CD4-positive, alpha-beta memory T cell (primary cell): ENCODE measurements at regions of chr16 and their contacts with region 1.

Region 1: DNA sequence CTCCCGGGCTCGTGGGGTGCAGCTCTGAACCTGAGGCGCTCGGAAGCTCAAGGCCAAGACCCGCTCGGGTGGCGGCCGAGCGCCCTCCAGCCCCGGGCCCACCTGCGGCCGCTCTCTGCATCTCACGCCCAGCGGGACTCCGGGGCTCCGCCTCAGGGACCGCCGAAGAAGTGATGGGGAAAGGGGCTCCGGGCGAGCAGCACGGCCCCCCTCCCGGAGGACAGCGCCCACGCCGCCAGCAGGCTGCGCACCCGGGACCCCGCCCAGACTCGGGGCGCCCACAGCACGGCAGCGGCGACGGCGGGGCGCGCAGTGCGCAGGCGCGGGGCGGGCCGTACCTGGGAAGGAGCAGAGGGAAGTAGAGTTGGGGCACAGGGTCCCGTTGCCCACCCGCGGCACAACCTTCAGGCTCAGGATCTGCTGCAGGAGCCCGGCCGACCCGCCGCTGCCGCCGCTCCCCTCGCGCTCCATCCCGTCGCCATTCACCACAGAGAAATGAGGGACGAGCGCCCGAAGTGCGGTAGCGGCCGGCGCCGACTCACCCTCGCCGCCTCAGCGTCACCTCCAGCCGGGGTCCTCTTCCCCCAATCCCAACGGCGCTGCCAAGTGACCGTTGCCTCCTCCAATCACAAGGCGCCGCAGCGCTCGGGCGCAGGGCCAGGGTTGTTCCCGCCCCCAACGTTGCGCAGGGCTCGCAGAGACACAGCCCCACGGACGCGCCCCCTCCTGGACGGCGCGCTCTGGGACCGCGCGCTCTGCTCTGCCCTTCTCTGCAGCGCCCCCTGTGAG is at the start of gene TMEM170A:
- DNase-seq: peak; percentile 97 to 99 (median 98)
- H3K4me3 ChIP-seq: peak within 1 kb of the TSS; percentile 47 to 91
- H3K4me3 Mint-ChIP-seq: peak within 1 kb of the TSS; percentile 91 to 98 (median 95)
- H3K27ac ChIP-seq: peak within 1 kb of the TSS; percentile 90
- H3K27ac Mint-ChIP-seq: peak within 1 kb of the TSS; percentile 88 to 98 (median 97)
- H3K4me1 ChIP-seq: peaks cover 40% of the 10 kb centered on the region
- H3K4me1 Mint-ChIP-seq: peaks cover 33 to 50% (median 42%) of the 10 kb centered on the region in 4 donors
- H3K27me3 ChIP-seq: no peaks in the 10 kb centered on the region
- H3K27me3 Mint-ChIP-seq: no peaks in the 10 kb centered on the region
- total RNA-seq, gene TMEM170A: 50.7 to 54.3 TPM

Region 2: GRCh38 chr16:75148311-75149195 is 315.8 kb before region 1 on chr16 and contains the start of gene ZFP1:
- CTCF ChIA-PET with region 1: interaction called, 4 read pairs
- POLR2A ChIA-PET with region 1: no interaction called
- intact Hi-C with region 1: loop called (anchors 2 kb)
- DNase-seq: peak; percentile 92 to 96 (median 93)
- H3K4me3 ChIP-seq: peak within 1 kb of the TSS; percentile 44 to 95
- H3K4me3 Mint-ChIP-seq: peak within 1 kb of the TSS; percentile 82 to 91 (median 88)
- H3K27ac ChIP-seq: peak within 1 kb of the TSS; percentile 75
- H3K27ac Mint-ChIP-seq: peak within 1 kb of the TSS; percentile 75 to 93 (median 91)
- H3K4me1 ChIP-seq: peaks cover 5% of the 10 kb centered on the region
- H3K4me1 Mint-ChIP-seq: peaks cover 8 to 23% (median 13%) of the 10 kb centered on the region in 4 donors
- H3K27me3 ChIP-seq: no peaks in the 10 kb centered on the region
- H3K27me3 Mint-ChIP-seq: no peaks in the 10 kb centered on the region
- total RNA-seq, gene ZFP1: 11.7 to 13.4 TPM

Region 3: DNA sequence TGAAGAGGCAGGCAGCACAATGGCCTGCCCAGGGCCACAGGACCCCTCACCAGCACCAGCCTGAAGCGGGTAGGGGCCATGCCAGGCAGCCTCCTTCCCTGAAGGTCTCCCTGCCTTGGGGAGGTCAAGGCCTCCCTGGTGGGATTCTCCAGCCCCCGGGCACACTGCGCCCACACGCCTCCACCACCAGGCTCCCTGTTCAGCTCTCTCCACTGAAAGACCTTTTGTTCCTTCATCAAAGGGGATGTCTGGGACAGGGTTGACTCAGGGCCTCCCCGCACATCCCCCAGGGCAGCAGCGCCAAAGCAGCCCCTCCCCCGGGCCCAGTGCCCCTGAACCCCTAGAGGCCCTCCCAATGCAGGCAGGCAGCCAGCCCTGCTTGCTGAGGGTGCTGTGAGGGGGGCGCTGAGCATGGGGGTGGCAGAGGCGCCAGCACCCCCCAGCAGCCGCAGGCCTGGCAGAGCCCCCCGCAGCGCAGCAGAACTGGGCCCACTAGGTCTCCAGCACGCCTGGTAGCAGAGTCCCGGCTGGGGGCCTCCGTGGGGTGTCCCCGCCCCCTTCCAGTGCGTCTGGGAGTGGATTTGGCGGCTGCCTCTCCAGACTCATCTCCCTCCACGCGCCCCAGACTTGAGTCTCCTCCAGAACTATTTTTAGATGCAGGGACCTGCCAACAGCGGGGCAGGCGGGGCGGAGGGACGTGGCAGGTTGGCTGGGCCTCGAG is 226.0 kb before region 1 on chr16:
- CTCF ChIA-PET with region 1: interaction called, 10 read pairs
- POLR2A ChIA-PET with region 1: no interaction called
- intact Hi-C with region 1: loop called (anchors 1 kb)
- DNase-seq: no peak
- H3K4me3 ChIP-seq: no peak overlapping the region
- H3K4me3 Mint-ChIP-seq: no peak overlapping the region
- H3K27ac ChIP-seq: no peak overlapping the region
- H3K27ac Mint-ChIP-seq: no peak overlapping the region
- H3K4me1 ChIP-seq: peaks cover 6% of the 10 kb centered on the region
- H3K4me1 Mint-ChIP-seq: peaks cover 0 to 5% (median 2%) of the 10 kb centered on the region in 4 donors
- H3K27me3 ChIP-seq: no peaks in the 10 kb centered on the region
- H3K27me3 Mint-ChIP-seq: no peaks in the 10 kb centered on the region

Region 4: GRCh38 chr16:75443298-75443697 is 21.0 kb before region 1 on chr16:
- CTCF ChIA-PET with region 1: interaction called, 17 read pairs
- POLR2A ChIA-PET with region 1: interaction called, 4 read pairs
- intact Hi-C with region 1: no loop called
- DNase-seq: no peak
- H3K4me3 ChIP-seq: no peak overlapping the region
- H3K4me3 Mint-ChIP-seq: no peak overlapping the region
- H3K27ac ChIP-seq: no peak overlapping the region
- H3K27ac Mint-ChIP-seq: no peak overlapping the region
- H3K4me1 ChIP-seq: no peaks in the 10 kb centered on the region
- H3K4me1 Mint-ChIP-seq: no peaks in the 10 kb centered on the region
- H3K27me3 ChIP-seq: no peaks in the 10 kb centered on the region
- H3K27me3 Mint-ChIP-seq: no peaks in the 10 kb centered on the region

Region 5: DNA sequence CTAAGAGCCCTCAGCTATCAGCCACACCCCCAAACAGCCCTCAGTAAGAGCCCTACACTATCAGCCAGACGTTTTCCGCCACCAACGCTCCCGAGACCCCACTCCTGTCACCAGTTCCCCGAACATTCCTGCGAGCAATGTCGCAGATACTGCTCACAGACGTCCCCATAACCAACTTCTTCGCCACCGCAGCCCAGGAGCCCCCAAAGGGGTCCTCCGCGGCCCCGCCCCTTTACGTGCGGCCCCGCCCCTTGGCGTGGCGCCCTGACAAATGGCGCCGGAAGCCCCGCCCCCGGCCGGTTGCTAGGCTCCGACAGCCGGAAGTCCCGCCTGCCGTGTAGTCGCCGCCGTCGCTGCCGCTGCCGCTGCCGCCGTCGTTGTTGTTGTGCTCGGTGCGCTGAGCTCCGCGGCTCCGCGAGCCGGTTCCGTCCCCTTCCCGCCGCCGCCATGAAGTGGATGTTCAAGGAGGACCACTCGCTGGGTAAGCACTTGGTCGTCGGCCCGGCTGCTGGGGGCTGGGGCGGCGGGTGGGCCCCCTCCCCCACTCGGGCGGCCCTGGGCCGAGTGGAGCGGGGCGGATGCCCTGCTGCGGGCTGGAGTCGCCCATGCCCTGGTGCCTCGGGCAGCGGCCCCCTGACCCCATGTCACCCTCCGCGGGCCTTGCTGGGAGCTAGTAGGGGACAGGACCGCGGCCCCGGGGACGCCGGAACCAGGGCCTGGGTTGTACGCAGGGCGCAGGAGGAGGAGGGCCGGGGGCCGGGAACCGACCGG is 101.9 kb after region 1 on chr16 and contains the start of gene GABARAPL2:
- CTCF ChIA-PET with region 1: interaction called, 10 read pairs
- POLR2A ChIA-PET with region 1: no interaction called
- intact Hi-C with region 1: loop called (anchors 1 kb)
- DNase-seq: peak; percentile 87 to 95 (median 91)
- H3K4me3 ChIP-seq: peak within 1 kb of the TSS; percentile 68 to 100
- H3K4me3 Mint-ChIP-seq: peak within 1 kb of the TSS; percentile 89 to 100 (median 97)
- H3K27ac ChIP-seq: peak within 1 kb of the TSS; percentile 82
- H3K27ac Mint-ChIP-seq: peak within 1 kb of the TSS; percentile 84 to 100 (median 97)
- H3K4me1 ChIP-seq: peaks cover 48% of the 10 kb centered on the region
- H3K4me1 Mint-ChIP-seq: peaks cover 26 to 57% (median 38%) of the 10 kb centered on the region in 4 donors
- H3K27me3 ChIP-seq: no peaks in the 10 kb centered on the region
- H3K27me3 Mint-ChIP-seq: peaks cover 0 to 7% of the 10 kb centered on the region in 2 donors
- total RNA-seq, gene GABARAPL2: 91.9 to 100 TPM

Region 6: DNA sequence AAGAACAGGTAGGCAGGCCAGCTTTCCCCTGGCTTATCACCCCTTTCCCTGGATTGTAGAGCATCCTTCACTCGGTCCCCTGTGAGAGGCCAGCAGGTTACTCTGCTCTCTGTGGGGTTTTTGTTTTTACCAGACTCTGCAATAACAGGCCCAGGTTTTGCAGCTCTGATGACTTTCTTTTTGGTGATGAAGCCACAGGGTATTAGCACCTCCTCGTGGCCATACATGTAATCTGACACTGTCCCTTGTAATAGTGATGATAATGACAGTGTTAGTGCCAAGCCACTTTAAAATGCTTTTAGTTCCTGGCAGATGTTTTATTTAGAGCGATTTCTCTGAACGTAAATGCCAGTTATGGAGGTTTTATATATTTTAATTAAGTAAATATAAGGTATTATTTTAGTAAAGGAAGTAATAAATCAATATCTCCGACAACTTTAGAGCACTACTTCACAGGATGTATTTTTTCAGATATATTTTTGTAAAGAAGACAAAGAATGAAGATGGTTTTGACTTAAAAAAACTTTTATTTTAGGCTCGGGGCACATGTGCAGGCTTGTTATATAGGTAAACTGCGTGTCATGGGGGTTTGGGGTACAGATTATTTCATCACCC is 299.9 kb after region 1 on chr16:
- CTCF ChIA-PET with region 1: interaction called, 104 read pairs
- POLR2A ChIA-PET with region 1: no interaction called
- intact Hi-C with region 1: no loop called
- DNase-seq: peak; percentile 57 to 69 (median 67)
- H3K4me3 ChIP-seq: no peak overlapping the region
- H3K4me3 Mint-ChIP-seq: no peak overlapping the region
- H3K27ac ChIP-seq: no peak overlapping the region
- H3K27ac Mint-ChIP-seq: peak overlapping the region in 1 of 7 donors; percentile 3
- H3K4me1 ChIP-seq: no peaks in the 10 kb centered on the region
- H3K4me1 Mint-ChIP-seq: peaks cover 4 to 8% (median 6%) of the 10 kb centered on the region in 4 donors
- H3K27me3 ChIP-seq: no peaks in the 10 kb centered on the region
- H3K27me3 Mint-ChIP-seq: peaks cover 0 to 2% of the 10 kb centered on the region in 2 donors